ENCODE measurements at regions of chr14 and their contacts with region 1.

Region 1: GRCh38 chr14:20413045-20413799 is at the start of gene TEP1:
- DNase-seq: peak; percentile 78
- ATAC-seq: peak; percentile 79
- H3K4me3 ChIP-seq: peak within 1 kb of the TSS; percentile 77 to 97 (median 93)
- H3K4me3 Mint-ChIP-seq: peak within 1 kb of the TSS; percentile 100
- H3K27ac ChIP-seq: peak within 1 kb of the TSS; percentile 90 to 92
- H3K27ac Mint-ChIP-seq: peak within 1 kb of the TSS; percentile 100
- H3K4me1 ChIP-seq: peaks cover 31 to 35% of the 10 kb centered on the region in 2 donors
- H3K4me1 Mint-ChIP-seq: peaks cover 48% of the 10 kb centered on the region
- H3K27me3 ChIP-seq: no peaks in the 10 kb centered on the region
- H3K27me3 Mint-ChIP-seq: no peaks in the 10 kb centered on the region
- CTCF ChIP-seq: no peak
- total RNA-seq, gene TEP1: 123 and 143 TPM in 2 replicates

Region 2: GRCh38 chr14:20327005-20327869 is 86.0 kb before region 1 on chr14:
- CTCF ChIA-PET with region 1: interaction called, 51 read pairs
- POLR2A ChIA-PET with region 1: no interaction called
- intact Hi-C with region 1: loop called (anchors 1 kb)
- DNase-seq: peak; percentile 81
- ATAC-seq: peak; percentile 67
- H3K4me3 ChIP-seq: no peak overlapping the region
- H3K4me3 Mint-ChIP-seq: peak overlapping the region; percentile 1
- H3K27ac ChIP-seq: no peak overlapping the region
- H3K27ac Mint-ChIP-seq: peak overlapping the region; percentile 33
- H3K4me1 ChIP-seq: peaks cover under 1 to 6% of the 10 kb centered on the region in 2 donors
- H3K4me1 Mint-ChIP-seq: peaks cover 30% of the 10 kb centered on the region
- H3K27me3 ChIP-seq: no peaks in the 10 kb centered on the region
- H3K27me3 Mint-ChIP-seq: no peaks in the 10 kb centered on the region
- CTCF ChIP-seq: peak; percentile 91

Region 3: DNA sequence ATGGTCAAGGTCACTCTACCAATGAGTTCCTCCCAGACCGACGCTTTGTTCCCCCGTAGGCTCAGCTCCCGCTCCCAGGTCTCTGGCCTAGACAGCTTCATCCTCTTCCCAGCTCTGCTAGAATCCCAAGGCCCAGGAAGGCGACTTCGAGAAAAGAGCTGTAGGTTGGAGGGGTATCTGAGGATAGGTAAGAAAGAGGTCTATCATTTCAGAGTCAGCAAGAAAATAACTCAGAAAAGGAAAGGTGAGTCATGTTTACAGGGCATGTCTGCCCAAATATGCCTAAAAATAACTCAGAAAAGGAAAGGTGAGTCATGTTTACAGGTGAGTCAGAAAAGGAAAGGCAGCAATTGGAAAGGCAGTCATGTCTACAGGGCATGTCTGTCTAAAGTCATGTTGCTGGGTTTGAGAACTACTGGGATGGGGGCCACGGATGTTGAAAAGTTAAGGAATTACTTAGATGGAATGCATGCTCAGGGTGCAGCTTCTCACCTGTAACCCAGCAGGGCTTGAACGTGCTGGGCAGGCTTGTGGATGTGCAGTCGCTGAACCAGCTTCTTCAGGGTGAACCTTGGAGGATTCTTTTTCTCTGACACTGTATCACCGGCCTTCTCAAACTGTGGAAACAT is 12.1 kb before region 1 on chr14:
- CTCF ChIA-PET with region 1: interaction called, 19 read pairs
- POLR2A ChIA-PET with region 1: no interaction called
- intact Hi-C with region 1: no loop called
- DNase-seq: no peak
- ATAC-seq: no peak
- H3K4me3 ChIP-seq: no peak overlapping the region
- H3K4me3 Mint-ChIP-seq: no peak overlapping the region
- H3K27ac ChIP-seq: no peak overlapping the region
- H3K27ac Mint-ChIP-seq: peak overlapping the region; percentile 69
- H3K4me1 ChIP-seq: no peaks in the 10 kb centered on the region
- H3K4me1 Mint-ChIP-seq: peaks cover 12% of the 10 kb centered on the region
- H3K27me3 ChIP-seq: no peaks in the 10 kb centered on the region
- H3K27me3 Mint-ChIP-seq: no peaks in the 10 kb centered on the region
- CTCF ChIP-seq: no peak

Region 4: DNA sequence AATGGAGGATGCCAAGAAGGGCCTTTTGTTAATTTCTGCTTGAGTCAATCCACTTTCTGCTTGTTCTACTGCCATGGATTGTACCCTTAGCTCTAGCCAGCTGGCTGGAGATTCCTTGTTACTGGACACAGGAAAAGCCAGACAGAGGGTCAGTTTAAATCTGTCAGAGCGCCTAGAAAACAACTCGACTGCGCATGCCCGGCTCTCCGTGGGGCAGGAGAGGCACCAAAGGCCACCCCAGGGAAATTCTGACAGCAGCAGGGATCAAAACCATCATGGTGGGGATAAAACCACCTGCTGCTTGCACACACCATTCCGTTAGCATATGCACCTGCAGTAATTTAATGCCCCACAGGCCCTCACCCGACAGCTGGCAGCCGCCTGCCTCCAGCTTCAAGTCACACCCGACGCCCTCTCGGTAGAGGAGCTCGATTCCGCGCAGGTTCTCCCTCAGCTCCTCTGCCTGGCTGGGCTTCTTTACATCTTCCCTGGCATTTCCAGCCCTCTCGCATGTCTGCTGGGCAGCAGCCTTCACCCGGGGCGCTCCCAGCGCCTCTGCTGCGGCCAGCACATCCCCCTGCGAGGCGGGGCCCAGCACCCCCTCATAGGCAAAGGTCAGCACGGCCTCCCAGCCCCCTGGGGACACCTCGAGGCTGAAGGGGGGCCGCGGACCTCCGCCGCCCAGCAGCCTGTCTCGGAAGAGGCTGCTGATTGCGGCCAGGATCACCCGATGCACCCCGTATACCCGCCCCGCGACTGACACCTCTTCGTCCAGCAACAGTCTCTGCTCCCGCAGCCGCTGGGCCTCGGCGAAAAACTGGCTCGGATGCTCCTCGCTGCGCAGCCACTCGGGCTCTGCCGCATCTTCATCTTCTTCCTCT is 21.7 kb after region 1 on chr14:
- CTCF ChIA-PET with region 1: interaction called, 24 read pairs
- POLR2A ChIA-PET with region 1: interaction called, 3 read pairs
- intact Hi-C with region 1: no loop called
- DNase-seq: no peak
- ATAC-seq: no peak
- H3K4me3 ChIP-seq: no peak overlapping the region
- H3K4me3 Mint-ChIP-seq: no peak overlapping the region
- H3K27ac ChIP-seq: no peak overlapping the region
- H3K27ac Mint-ChIP-seq: no peak overlapping the region
- H3K4me1 ChIP-seq: peaks cover 33 to 53% of the 10 kb centered on the region in 2 donors
- H3K4me1 Mint-ChIP-seq: peaks cover 43% of the 10 kb centered on the region
- H3K27me3 ChIP-seq: no peaks in the 10 kb centered on the region
- H3K27me3 Mint-ChIP-seq: no peaks in the 10 kb centered on the region
- CTCF ChIP-seq: no peak

Region 5: GRCh38 chr14:20454516-20455354 is 41.5 kb after region 1 on chr14 and contains the starts of genes APEX1 and OSGEP:
- CTCF ChIA-PET with region 1: interaction called, 59 read pairs
- POLR2A ChIA-PET with region 1: interaction called, 14 read pairs
- intact Hi-C with region 1: loop called (anchors 1 kb)
- DNase-seq: peak; percentile 99
- ATAC-seq: peak; percentile 91
- H3K4me3 ChIP-seq: peak within 1 kb of the TSS; percentile 70 to 95 (median 92)
- H3K4me3 Mint-ChIP-seq: peak within 1 kb of the TSS; percentile 17
- H3K27ac ChIP-seq: peak within 1 kb of the TSS; percentile 87 to 97
- H3K27ac Mint-ChIP-seq: no peak within 1 kb of the TSS
- H3K4me1 ChIP-seq: peaks cover 21 to 54% of the 10 kb centered on the region in 2 donors
- H3K4me1 Mint-ChIP-seq: peaks cover 23% of the 10 kb centered on the region
- H3K27me3 ChIP-seq: no peaks in the 10 kb centered on the region
- H3K27me3 Mint-ChIP-seq: no peaks in the 10 kb centered on the region
- CTCF ChIP-seq: no peak
- total RNA-seq, gene APEX1: 103 and 111 TPM in 2 replicates
- total RNA-seq, gene OSGEP: 115 and 117 TPM in 2 replicates

Region 6: DNA sequence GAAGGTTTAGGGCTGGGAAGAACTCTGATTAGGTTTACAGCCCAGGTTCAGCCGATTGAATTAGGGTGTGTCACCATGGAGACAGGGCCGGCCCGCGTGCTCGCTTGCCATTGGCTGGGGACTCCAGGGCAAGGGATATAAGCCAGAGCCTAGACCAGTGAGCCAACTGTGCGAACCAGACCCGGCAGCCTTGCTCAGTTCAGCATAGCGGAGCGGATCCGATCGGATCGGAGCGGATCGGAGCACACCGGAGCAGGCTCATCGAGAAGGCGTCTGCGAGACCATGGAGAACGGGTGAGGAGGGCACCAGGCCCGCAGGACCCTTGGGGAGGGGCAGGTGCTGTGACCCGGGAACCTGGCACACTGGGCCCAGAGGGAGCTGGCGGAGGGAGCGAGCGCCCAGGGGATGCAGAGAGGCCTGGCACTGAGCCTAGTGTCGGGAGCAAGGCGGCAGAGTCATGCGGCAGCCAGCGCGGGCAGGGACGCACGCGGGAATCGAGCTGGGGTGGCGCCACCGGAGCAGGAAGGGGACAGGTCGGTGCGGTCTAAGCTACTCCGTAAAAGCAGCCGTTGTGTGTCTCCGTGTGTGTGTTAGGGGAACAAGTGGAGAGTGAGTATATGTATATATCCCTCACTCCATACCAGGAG is 56.1 kb after region 1 on chr14 and contains the start of gene PNP:
- CTCF ChIA-PET with region 1: interaction called, 40 read pairs
- POLR2A ChIA-PET with region 1: no interaction called
- intact Hi-C with region 1: loop called (anchors 2 kb)
- DNase-seq: peak; percentile 92
- ATAC-seq: peak; percentile 93
- H3K4me3 ChIP-seq: peak within 1 kb of the TSS; percentile 88 to 99 (median 98)
- H3K4me3 Mint-ChIP-seq: peak within 1 kb of the TSS; percentile 100
- H3K27ac ChIP-seq: peak within 1 kb of the TSS; percentile 73 to 81
- H3K27ac Mint-ChIP-seq: peak within 1 kb of the TSS; percentile 96
- H3K4me1 ChIP-seq: peaks cover 31 to 33% of the 10 kb centered on the region in 2 donors
- H3K4me1 Mint-ChIP-seq: peaks cover 52% of the 10 kb centered on the region
- H3K27me3 ChIP-seq: no peaks in the 10 kb centered on the region
- H3K27me3 Mint-ChIP-seq: no peaks in the 10 kb centered on the region
- CTCF ChIP-seq: no peak
- total RNA-seq, gene PNP: 38.9 and 42.0 TPM in 2 replicates

Region 7: GRCh38 chr14:20682435-20683124 is 269.4 kb after region 1 on chr14:
- CTCF ChIA-PET with region 1: interaction called, 6 read pairs
- POLR2A ChIA-PET with region 1: interaction called, 3 read pairs
- intact Hi-C with region 1: loop called (anchors 2 kb)
- DNase-seq: peak; percentile 88
- ATAC-seq: peak; percentile 57
- H3K4me3 ChIP-seq: peak overlapping the region; percentile 81 to 95 (median 92)
- H3K4me3 Mint-ChIP-seq: no peak overlapping the region
- H3K27ac ChIP-seq: peak overlapping the region; percentile 92 to 94
- H3K27ac Mint-ChIP-seq: no peak overlapping the region
- H3K4me1 ChIP-seq: peaks cover 31 to 48% of the 10 kb centered on the region in 2 donors
- H3K4me1 Mint-ChIP-seq: peaks cover 15% of the 10 kb centered on the region
- H3K27me3 ChIP-seq: no peaks in the 10 kb centered on the region
- H3K27me3 Mint-ChIP-seq: no peaks in the 10 kb centered on the region
- CTCF ChIP-seq: no peak

Measured in B cell (primary cell).